ENCODE measurements at regions of chr6 and their contacts with region 1.

Region 1: DNA sequence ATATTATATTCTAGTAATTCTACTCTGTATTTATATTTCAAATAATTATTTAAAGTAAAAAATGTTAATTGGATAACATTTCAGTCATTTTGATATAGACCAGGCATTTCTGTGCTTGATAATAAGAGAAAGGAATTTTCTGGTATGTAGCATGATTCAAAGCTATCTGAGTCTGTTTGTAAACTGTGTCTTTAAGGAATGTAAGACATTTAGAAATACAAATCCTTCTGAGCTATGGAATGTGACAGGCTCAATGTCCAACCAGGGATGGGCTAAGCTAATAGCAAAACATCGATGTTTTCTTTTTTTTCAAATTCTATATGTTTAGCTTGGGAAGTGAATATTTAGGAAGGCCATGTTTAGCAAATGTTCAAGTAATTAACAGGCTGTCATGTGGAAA is 41.5 kb upstream of the FAM83B start:
- DNase-seq: no peak
- H3K4me3 ChIP-seq: no peak overlapping the region
- H3K27ac ChIP-seq: no peak overlapping the region
- H3K4me1 ChIP-seq: peaks cover 0 to 8% (median 2%) of the 10 kb centered on the region in 4 donors
- H3K27me3 ChIP-seq: no peaks in the 10 kb centered on the region
- CTCF ChIP-seq: no peak
- EP300 ChIP-seq: no peak
- POLR2A ChIP-seq: no peak

Region 2: DNA sequence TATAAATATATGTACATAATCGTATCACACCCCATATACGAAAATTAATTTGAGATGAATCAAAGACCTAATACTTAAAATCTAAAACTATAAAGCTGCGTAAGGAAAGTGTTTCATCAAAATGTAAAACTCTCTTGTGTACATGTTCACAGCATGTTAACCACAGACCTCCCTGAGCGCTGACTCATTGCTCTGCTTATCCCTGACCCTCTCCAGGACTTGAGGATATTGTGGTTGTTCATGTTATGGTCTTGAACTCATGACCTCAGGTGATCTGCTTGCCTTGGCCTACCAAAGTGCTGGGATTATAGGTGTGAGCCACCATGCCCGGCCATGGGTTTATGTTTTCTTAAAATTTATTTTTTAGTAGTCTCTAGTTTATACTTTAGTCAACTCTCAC is 55.7 kb after region 1 on chr6:
- in situ Hi-C with region 1: no loop called
- intact Hi-C with region 1: no loop called
- DNase-seq: no peak
- H3K4me3 ChIP-seq: no peak overlapping the region
- H3K27ac ChIP-seq: peak overlapping the region in 3 of 4 donors; percentile 59 to 75 (median 74)
- H3K4me1 ChIP-seq: peaks cover 0 to 29% (median 8%) of the 10 kb centered on the region in 4 donors
- H3K27me3 ChIP-seq: no peaks in the 10 kb centered on the region
- CTCF ChIP-seq: no peak
- EP300 ChIP-seq: no peak
- POLR2A ChIP-seq: no peak

Region 3: GRCh38 chr6:55082021-55082420 is 276.9 kb after region 1 on chr6:
- in situ Hi-C with region 1: no loop called
- intact Hi-C with region 1: loop called (anchors 5 kb)
- DNase-seq: no peak
- H3K4me3 ChIP-seq: no peak overlapping the region
- H3K27ac ChIP-seq: no peak overlapping the region
- H3K4me1 ChIP-seq: no peaks in the 10 kb centered on the region
- H3K27me3 ChIP-seq: no peaks in the 10 kb centered on the region
- CTCF ChIP-seq: no peak
- EP300 ChIP-seq: no peak
- POLR2A ChIP-seq: no peak